ENCODE measurements at regions of chr2 and their contacts with region 1.

Region 1: DNA sequence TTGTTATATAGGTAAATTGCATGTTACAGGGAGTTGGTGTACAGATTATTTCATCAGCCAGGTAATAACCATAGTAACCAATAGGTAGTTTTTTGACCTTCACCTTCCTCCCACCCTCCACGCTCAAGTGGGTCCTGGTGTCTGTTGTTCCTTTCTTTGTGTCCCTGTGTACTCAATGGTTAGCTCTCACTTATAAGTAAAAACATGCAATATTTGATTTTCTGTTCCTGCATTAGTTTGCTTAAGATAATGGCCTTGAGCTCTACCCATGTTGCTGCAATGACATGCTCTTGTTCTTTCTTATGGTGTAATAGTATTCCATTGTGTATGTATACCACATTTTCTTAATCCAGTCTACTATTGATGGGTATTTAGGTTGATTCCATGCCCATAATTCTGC is 233.7 kb upstream of the EPC2 start:
- DNase-seq: no peak
- H3K4me3 ChIP-seq: no peak overlapping the region
- H3K27ac ChIP-seq: no peak overlapping the region
- H3K4me1 ChIP-seq: no peaks in the 10 kb centered on the region
- H3K27me3 ChIP-seq: no peaks in the 10 kb centered on the region
- CTCF ChIP-seq: no peak
- POLR2A ChIP-seq: no peak

Region 2: GRCh38 chr2:148218326-148219075 is 192.4 kb before region 1 on chr2:
- intact Hi-C with region 1: loop called (anchors 5 kb)
- DNase-seq: no peak
- H3K4me3 ChIP-seq: no peak overlapping the region
- H3K27ac ChIP-seq: no peak overlapping the region
- H3K4me1 ChIP-seq: no peaks in the 10 kb centered on the region
- H3K27me3 ChIP-seq: no peaks in the 10 kb centered on the region
- CTCF ChIP-seq: no peak
- POLR2A ChIP-seq: no peak